Head of caudate nucleus (tissue), 42 donors: ENCODE measurements at regions of chr9 and their contacts with region 1.

Region 1: GRCh38 chr9:100028201-100028784 is 70.5 kb downstream of the ERP44 start:
- DNase-seq: peak; percentile 10 to 90 (median 70)

Region 2: DNA sequence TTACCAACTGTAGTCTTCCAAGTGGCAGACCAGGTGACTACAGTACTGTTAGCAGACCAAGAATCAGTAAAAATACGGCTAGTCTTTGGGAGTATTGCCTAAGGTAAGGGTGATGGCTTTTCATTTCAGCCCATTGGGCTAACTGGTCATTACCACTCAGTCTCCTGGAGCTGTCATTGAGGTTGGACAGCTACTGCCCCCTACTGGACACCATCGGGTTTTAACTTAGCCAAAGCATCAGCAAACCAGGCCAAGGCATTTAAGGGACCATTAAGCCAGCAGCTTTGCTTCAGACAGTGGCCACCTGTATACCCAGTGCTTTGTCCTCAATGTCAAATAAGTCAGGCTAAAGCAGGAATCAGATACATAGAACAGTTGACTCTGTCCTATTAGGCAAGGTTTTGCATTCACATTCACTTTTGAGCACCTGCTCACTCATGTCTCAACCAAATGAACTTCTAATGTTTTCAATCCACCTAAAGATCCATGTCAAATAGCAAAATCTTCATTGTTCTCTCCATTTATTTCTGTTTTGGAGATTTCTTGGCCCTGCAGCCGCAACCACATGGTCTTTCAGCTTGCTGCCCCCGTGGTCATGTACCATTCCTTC is 188.0 kb after region 1 on chr9:
- intact Hi-C with region 1: loop called (anchors 10 kb)
- DNase-seq: peak in 32 of 42 donors; percentile 8 to 84 (median 48)

Region 3: DNA sequence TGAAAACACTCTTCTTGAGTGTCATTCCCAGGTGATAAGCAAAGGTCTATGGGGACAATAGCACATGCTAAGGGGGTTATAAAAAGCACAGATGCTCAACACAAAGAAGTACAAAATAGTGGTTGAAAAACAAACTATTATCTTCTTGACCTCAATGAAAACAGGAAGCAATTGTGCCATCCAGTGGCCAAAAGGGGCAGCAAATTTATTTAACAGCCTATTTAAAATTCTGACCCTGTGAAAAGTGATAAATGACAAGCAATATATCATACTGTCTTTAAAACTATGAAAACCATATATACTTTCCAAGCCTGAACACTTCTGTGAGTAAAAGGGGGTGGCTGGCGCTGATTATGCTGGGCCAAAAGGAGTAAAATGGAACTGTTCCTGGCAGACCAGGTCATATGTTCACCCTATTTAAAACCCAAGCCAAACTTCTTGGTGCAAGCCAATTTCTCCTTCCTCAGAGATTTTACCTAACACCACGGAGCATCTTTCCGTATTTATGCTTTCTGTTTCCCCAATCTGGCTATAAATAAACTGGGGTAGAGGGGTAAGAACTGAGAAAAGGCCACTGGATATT is 294.8 kb after region 1 on chr9:
- intact Hi-C with region 1: loop called (anchors 10 kb)
- DNase-seq: peak in 33 of 42 donors; percentile 15 to 78 (median 37)